ENCODE measurements at regions of chr6 and their contacts with region 1.

Region 1: DNA sequence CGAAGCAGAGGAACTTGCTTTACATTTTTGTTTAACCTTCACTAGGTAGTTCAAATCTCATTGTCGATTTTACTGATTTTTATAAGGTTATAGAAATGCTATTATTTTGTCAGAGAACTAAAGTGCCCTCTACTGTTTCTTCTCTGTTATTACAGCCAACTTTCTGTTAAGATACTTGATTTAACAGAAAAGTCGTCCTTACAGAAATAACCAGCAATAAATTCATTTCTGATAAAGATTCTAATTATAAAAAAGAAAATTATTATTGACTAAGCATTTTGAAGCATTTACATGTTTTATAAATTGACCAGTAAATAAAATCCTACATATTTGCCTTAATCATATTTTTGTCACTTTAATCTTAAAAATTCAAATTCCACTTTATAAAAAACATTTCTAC is 60.8 kb downstream of the OGFRL1 start:
- DNase-seq: no peak
- H3K4me3 Mint-ChIP-seq: no peak overlapping the region
- H3K27ac Mint-ChIP-seq: no peak overlapping the region
- H3K4me1 Mint-ChIP-seq: no peaks in the 10 kb centered on the region
- H3K27me3 Mint-ChIP-seq: no peaks in the 10 kb centered on the region
- CTCF ChIP-seq: peak; percentile 73

Region 2: DNA sequence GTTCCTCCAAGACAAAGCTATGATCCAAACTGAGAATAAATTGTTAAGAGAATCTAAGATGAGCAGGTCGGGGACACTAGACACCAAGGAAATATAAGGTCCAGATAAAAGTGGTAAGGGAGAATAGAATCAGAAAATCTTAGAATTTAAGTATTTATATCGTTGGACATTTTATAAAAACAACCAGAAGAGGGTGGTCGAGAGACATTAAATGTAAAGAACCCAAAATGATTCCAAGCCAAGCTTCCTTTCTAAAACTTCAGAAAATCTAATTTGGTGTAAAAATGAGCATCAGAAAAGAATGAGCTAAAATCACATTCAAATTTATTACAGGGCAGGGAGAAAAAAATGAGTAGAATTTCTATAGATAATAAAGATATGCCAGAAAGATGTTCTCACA is 158.6 kb before region 1 on chr6:
- CTCF ChIA-PET with region 1: interaction called, 4 read pairs
- intact Hi-C with region 1: loop called (anchors 1 kb)
- DNase-seq: no peak
- H3K4me3 Mint-ChIP-seq: no peak overlapping the region
- H3K27ac Mint-ChIP-seq: no peak overlapping the region
- H3K4me1 Mint-ChIP-seq: no peaks in the 10 kb centered on the region
- H3K27me3 Mint-ChIP-seq: no peaks in the 10 kb centered on the region
- CTCF ChIP-seq: peak; percentile 29